Activated CD8-positive, alpha-beta T cell treated with anti-CD3 and anti-CD28 coated beads, Interleukin-2, amount 10 ng/mL, durations not matched to agents 7 days and 5 days (primary cell): ENCODE measurements at regions of chr1 and their contacts with region 1.

Region 1: DNA sequence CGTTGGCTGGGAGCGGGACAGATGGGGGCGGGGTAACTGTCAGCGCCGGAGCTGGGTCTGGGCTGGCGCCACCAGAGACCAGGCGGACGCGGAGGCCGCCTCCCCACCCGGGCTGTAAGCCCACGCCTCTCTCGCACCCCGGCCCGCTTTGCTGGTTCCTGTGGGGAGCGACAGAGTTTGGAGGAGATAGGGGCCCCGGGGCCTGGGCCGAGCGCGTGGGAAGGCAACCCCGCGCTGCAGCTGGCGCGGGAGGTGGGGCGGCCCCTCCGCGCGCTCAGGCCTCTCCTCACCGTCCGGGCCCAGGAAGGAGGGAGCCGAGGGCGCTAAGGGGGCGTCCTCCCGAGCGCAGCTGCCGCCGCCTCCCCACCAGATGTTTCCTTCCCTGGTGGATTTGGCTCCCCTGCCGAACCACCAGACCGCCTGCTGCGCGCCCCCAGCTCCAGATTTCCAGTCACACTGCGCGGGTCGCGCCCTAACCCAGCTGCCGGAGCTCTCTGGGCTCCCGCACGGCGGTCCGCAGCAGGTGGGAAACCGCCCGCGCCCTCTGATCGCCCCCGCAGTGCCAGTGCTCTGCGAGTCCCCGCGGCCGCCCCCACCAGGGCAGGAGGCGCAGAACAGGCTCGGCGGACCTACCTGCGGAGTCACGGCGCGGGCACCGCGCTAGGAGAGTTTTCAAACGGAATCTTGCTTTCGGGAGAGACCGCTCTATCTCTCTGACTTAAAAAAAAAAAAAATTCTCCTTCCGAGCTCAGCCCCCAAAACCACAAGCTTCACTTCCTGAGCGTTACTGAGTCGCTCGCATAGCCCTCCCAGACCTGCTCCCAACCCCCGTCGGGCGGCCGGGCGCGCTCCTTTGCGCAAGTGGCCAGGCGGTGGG is 1.1 kb downstream of the GFI1 start:
- DNase-seq: peak; percentile 94
- ATAC-seq: peak; percentile 63
- H3K4me3 Mint-ChIP-seq: peak overlapping the region; percentile 90
- H3K27ac Mint-ChIP-seq: peak overlapping the region; percentile 91
- H3K4me1 Mint-ChIP-seq: peaks cover 44% of the 10 kb centered on the region
- H3K27me3 Mint-ChIP-seq: no peaks in the 10 kb centered on the region

Region 2: DNA sequence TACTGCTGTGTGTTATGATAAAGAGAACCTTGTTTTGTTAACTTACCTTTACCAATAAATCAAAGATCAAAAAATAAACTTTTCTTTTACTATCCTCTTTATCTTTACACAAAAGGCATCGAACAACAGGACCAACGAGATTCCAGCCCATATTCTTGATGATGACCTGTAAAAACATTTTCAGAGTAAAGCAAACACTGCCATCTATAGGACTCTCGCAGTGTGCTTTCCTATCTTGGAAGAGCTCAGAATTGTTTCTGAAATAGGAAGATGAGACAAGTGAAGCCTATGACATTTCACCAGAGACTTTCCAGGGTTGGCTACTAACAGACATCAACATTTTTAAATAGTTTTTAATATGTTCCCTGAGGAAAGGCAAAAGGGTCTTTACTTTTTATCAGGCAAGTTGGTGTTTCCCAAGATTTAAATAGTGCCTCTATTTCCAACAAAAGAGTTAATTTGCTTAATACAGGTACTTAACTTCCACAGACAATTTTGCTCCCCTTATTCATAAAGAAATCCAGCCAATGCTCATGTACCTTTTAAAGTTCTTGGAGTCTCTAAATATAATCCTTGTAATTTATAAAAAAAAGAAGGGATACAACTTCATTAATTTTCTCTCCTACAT is 194.1 kb before region 1 on chr1:
- CTCF ChIA-PET with region 1: no interaction called
- POLR2A ChIA-PET with region 1: no interaction called
- DNase-seq: no peak
- ATAC-seq: no peak
- H3K4me3 Mint-ChIP-seq: no peak overlapping the region
- H3K27ac Mint-ChIP-seq: no peak overlapping the region
- H3K4me1 Mint-ChIP-seq: peaks cover 18% of the 10 kb centered on the region
- H3K27me3 Mint-ChIP-seq: no peaks in the 10 kb centered on the region

Region 3: GRCh38 chr1:92310185-92310597 is 175.4 kb before region 1 on chr1:
- CTCF ChIA-PET with region 1: interaction called, 122 read pairs
- POLR2A ChIA-PET with region 1: interaction called, 157 read pairs
- DNase-seq: no peak
- ATAC-seq: peak; percentile 51
- H3K4me3 Mint-ChIP-seq: no peak overlapping the region
- H3K27ac Mint-ChIP-seq: no peak overlapping the region
- H3K4me1 Mint-ChIP-seq: peaks cover 38% of the 10 kb centered on the region
- H3K27me3 Mint-ChIP-seq: no peaks in the 10 kb centered on the region

Region 4: GRCh38 chr1:92367496-92367895 is 118.1 kb before region 1 on chr1:
- CTCF ChIA-PET with region 1: interaction called, 6 read pairs
- POLR2A ChIA-PET with region 1: interaction called, 36 read pairs
- DNase-seq: peak; percentile 50
- ATAC-seq: peak; percentile 59
- H3K4me3 Mint-ChIP-seq: peak overlapping the region; percentile 11
- H3K27ac Mint-ChIP-seq: peak overlapping the region; percentile 56
- H3K4me1 Mint-ChIP-seq: peaks cover 63% of the 10 kb centered on the region
- H3K27me3 Mint-ChIP-seq: no peaks in the 10 kb centered on the region

Region 5: DNA sequence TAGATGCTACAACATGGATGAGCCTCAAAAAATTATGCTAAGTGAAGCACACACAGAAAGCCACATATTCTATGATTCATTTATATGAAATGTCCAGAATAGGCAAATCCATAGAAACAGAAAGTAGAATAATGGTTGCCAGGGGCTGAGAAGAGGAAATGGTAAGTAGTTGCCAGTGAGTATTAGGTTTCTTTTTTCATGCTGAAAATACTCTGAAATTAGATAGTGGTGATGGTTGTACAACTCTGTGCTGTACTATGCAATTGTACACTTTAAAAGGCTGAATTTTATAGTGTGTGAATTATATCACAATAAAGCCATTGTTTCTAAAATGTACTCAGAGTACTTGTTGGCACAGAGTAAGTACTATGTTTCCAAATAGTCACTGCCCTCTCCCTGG is 16.6 kb after region 1 on chr1:
- CTCF ChIA-PET with region 1: interaction called, 6 read pairs
- POLR2A ChIA-PET with region 1: interaction called, 12 read pairs
- DNase-seq: no peak
- ATAC-seq: peak; percentile 62
- H3K4me3 Mint-ChIP-seq: no peak overlapping the region
- H3K27ac Mint-ChIP-seq: peak overlapping the region; percentile 55
- H3K4me1 Mint-ChIP-seq: peaks cover 31% of the 10 kb centered on the region
- H3K27me3 Mint-ChIP-seq: no peaks in the 10 kb centered on the region

Region 6: DNA sequence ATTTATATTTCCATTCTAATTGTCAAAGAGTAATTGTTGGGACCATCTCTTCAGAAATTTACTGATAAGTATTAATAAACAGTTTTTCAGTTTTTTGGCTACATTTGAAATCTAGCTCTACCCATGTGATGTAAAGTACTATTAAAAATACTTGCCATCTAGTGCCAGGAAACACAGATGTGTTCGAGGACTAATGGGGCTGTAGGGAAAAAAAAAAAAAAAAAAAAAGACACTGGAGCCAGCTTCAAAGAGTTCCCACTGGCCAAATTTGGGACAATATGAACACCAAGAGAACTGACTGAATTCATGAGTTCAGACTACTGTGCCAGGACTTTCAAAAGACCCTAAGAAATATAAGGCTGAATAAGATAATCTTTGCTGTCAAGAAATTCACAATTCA is 66.3 kb after region 1 on chr1:
- CTCF ChIA-PET with region 1: interaction called, 5 read pairs
- POLR2A ChIA-PET with region 1: interaction called, 13 read pairs
- DNase-seq: no peak
- ATAC-seq: no peak
- H3K4me3 Mint-ChIP-seq: no peak overlapping the region
- H3K27ac Mint-ChIP-seq: no peak overlapping the region
- H3K4me1 Mint-ChIP-seq: peaks cover 19% of the 10 kb centered on the region
- H3K27me3 Mint-ChIP-seq: no peaks in the 10 kb centered on the region

Region 7: GRCh38 chr1:92583821-92584760 is 98.5 kb after region 1 on chr1:
- CTCF ChIA-PET with region 1: interaction called, 29 read pairs
- POLR2A ChIA-PET with region 1: interaction called, 50 read pairs
- DNase-seq: no peak
- ATAC-seq: peak; percentile 85
- H3K4me3 Mint-ChIP-seq: peak overlapping the region; percentile 72
- H3K27ac Mint-ChIP-seq: peak overlapping the region; percentile 88
- H3K4me1 Mint-ChIP-seq: peaks cover 51% of the 10 kb centered on the region
- H3K27me3 Mint-ChIP-seq: no peaks in the 10 kb centered on the region

Region 8: DNA sequence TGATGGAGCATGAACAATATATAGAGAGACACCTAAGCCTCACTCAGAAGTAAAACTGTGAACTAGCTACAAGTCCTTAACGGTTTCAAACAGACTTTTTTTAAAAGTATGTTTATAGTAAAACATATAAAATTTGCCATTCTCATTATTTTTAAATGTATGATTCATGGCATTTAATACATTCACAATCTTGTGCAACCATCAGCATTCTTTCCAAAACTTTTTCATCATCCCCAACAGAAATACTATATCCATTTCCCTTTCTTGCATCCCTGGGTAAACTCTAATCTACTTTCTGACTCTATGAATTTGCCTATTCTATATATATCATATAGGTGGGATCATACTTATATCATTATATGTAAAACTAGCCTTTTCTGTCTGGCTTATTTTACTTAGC is 273.7 kb after region 1 on chr1:
- CTCF ChIA-PET with region 1: no interaction called
- POLR2A ChIA-PET with region 1: no interaction called
- DNase-seq: no peak
- ATAC-seq: no peak
- H3K4me3 Mint-ChIP-seq: no peak overlapping the region
- H3K27ac Mint-ChIP-seq: no peak overlapping the region
- H3K4me1 Mint-ChIP-seq: no peaks in the 10 kb centered on the region
- H3K27me3 Mint-ChIP-seq: peaks cover 19% of the 10 kb centered on the region